ENCODE measurements at regions of chr11 and their contacts with region 1.

Region 1: DNA sequence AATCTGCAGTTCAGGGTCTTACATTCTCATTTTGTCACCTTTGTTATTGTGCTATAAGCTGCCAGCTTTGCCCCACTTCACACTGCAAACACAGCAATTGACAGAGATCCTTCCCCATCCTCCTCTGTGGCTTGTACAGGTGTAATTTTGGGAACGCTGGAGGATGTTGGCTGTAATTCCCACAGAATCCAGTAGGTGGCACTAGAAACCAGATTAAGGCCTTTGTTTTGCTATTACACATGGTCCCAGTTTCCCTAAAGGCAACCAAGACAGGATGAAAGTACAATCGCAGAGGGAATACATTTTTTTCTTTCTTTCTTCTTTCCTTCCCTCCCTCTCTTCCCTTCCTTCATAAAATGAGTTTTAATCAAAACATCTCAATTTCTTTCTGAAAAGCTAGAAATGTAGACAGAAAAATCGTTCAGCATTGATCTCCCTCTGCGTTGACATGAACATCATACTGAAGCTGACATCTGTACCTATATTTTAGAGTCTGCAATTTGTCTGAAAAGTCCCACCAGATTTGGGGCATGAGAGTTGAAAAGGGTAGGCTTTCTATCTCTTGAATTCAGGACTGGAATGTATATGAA is 21.3 kb upstream of the NELL1 start:
- DNase-seq: peak; percentile 41 to 59
- ATAC-seq: peak; percentile 75 to 85; a peak in 4 of 6 replicates
- H3K4me3 ChIP-seq: no peak overlapping the region
- H3K27ac ChIP-seq: no peak overlapping the region
- H3K4me1 ChIP-seq: no peaks in the 10 kb centered on the region
- CTCF ChIP-seq: peak; percentile 80
- EP300 ChIP-seq: no peak
- POLR2A ChIP-seq: no peak
- RAD21 ChIP-seq: peak; percentile 84 to 88

Region 2: GRCh38 chr11:20623252-20623651 is 24.8 kb before region 1 on chr11:
- CTCF ChIA-PET with region 1: interaction called, 17 read pairs
- POLR2A ChIA-PET with region 1: no interaction called
- DNase-seq: no peak
- ATAC-seq: no peak; a peak in 1 of 6 replicates
- H3K4me3 ChIP-seq: no peak overlapping the region
- H3K27ac ChIP-seq: no peak overlapping the region
- H3K4me1 ChIP-seq: no peaks in the 10 kb centered on the region
- CTCF ChIP-seq: no peak
- EP300 ChIP-seq: no peak
- POLR2A ChIP-seq: no peak
- RAD21 ChIP-seq: no peak

Region 3: DNA sequence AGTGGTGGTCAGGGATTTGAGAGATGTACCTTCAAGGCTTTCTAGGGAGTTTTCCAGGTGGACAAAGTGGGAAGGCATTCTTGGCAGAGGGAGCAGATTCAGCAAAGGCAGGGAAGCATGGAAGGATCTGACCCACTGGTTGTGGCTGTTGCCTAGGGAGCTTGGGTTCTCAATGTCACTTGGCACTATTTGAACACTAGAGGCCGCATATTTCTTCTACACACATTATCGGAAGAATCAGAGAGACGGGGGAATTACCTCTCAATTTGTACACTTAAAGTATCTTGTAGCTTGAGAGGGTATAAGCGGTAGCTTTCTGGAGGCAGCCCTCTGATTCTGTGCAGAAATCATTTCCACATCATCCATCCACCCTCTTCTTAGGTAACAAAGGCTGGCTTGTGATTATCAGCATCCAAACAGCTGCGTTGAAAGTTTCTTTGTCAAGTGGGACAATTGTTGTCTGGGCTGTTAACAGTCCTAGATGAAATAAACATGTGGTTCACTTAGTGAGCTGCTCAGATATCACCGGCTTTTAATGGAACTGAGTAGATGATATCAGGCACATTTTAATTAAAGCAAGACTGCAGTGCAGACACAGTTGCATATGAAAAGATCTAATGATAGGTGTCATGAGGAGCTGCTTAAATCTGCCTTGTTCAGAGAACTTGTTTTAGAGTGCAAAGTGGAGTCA is 23.9 kb after region 1 on chr11:
- CTCF ChIA-PET with region 1: interaction called, 21 read pairs
- POLR2A ChIA-PET with region 1: no interaction called
- DNase-seq: peak; percentile 20 to 31
- ATAC-seq: peak; percentile 78 to 84; a peak in 5 of 6 replicates
- H3K4me3 ChIP-seq: no peak overlapping the region
- H3K27ac ChIP-seq: no peak overlapping the region
- H3K4me1 ChIP-seq: peaks cover 8% of the 10 kb centered on the region; the same call in 2 of the 3 replicates
- CTCF ChIP-seq: peak; percentile 48
- EP300 ChIP-seq: no peak
- POLR2A ChIP-seq: no peak
- RAD21 ChIP-seq: peak in 1 of 2 experiments; percentile 16; a peak in 1 of 5 replicates

Region 4: DNA sequence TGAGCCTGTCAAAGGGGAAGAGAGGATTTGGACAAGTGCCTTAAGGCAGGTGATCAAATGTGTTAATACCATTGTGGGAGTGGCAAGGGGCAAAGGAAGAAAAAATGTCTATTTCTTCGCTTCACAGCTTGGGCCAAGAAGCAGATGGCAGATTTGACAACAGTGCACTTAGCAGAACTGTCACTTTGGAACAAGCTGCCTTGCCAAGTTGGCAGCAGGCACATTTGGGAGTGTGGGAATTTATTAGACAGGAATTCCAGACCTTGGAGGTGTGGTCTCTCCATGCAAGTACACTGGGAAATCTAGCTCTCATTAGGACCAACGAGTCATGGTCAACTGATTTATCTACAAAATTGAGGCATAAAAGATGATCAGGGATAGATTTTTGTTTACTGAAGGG is 286.4 kb after region 1 on chr11:
- CTCF ChIA-PET with region 1: no interaction called
- POLR2A ChIA-PET with region 1: no interaction called
- DNase-seq: no peak
- ATAC-seq: no peak
- H3K4me3 ChIP-seq: no peak overlapping the region
- H3K27ac ChIP-seq: no peak overlapping the region
- H3K4me1 ChIP-seq: no peaks in the 10 kb centered on the region
- CTCF ChIP-seq: no peak
- EP300 ChIP-seq: no peak
- POLR2A ChIP-seq: no peak
- RAD21 ChIP-seq: no peak

Region 5: GRCh38 chr11:22130462-22131053 is 1482.5 kb after region 1 on chr11:
- CTCF ChIA-PET with region 1: interaction called, 13 read pairs
- POLR2A ChIA-PET with region 1: no interaction called
- DNase-seq: peak in 1 of 2 experiments; percentile 9
- ATAC-seq: peak; percentile 34 to 68; a peak in 3 of 6 replicates
- H3K4me3 ChIP-seq: no peak overlapping the region
- H3K27ac ChIP-seq: no peak overlapping the region
- H3K4me1 ChIP-seq: no peaks in the 10 kb centered on the region
- CTCF ChIP-seq: peak; percentile 52
- EP300 ChIP-seq: no peak
- POLR2A ChIP-seq: no peak
- RAD21 ChIP-seq: peak; percentile 66 to 75

Measured in A549 (cell line).